Colonic mucosa (tissue), 4 donors: ENCODE measurements at regions of chr6 and their contacts with region 1.

Region 1: DNA sequence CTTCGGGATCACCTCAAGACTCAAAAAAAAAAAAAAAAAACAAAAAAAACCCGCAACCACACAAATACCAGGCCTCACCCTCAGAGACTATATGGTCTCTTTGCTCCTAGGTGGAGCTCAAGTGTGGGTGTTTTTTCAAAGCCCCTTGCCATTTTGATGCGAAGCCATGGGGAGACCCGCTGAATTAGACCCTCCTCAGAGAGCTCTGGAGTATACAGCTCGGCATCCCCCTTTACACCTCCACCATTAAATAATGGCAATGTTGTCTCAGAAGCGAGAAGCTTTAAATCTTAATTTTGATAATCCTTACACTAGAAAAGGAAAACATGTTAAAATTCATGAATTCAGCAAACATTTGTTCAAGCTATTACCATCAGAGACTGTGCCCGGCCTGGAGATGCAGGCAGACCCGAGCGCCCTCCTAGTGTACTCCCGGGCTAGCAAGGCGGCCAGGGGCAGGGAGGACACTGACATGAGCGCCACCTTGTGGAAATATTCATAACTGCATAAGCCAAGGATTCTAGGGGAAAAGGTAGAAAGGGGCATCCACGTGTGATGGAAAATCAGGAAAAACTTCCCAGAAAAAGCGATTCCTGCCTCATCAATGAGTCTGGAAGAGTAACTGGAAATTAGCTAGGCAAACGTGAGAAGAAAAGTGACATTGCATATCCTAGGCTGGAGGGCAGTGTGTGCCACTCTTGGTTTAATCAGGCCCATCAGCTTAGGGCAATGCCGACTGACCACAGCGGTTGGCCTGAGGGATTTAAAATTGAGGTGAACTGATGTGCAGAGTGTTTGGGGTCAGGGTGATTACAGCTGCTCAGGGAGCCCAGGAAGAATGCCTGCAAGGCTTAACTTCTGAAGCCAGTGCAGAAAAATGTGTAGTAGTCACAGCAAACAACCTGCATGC is 72.5 kb downstream of the B3GAT2 start:
- DNase-seq: peak; percentile 65
- H3K4me3 ChIP-seq: no peak overlapping the region
- H3K27ac ChIP-seq: no peak overlapping the region
- H3K4me1 ChIP-seq: no peaks in the 10 kb centered on the region
- H3K27me3 ChIP-seq: no peaks in the 10 kb centered on the region
- CTCF ChIP-seq: peak; percentile 91

Region 2: DNA sequence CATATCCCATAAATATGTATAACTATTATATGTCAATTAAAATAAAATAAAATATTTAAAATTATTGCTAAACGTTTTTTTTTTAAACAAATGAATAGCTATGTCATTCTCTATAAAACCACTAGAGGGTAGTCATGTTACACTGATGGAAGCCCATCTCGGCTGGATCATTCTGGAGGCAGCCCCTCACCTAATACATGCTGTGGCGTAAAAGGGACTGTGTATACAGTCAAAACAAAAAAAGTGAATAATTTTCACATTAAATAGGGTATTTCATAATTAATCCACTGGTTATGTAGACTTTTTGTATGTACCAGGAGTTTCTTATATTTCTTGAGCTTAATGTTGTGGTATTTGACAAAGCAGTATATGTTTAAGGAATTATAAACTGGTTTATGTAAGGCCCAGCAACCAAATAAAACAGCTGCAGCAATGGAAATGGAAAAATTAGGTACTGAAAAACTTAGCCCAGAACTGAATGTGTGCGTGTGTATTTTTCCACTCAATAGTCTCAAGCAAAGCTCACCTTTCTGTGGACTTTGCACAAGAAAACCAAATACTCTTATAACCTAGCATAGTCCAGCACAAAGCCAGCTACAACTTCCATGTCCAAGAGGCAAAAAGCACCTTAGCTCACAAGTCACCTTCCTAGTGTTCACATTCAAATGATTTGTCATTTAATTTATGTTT is 663.2 kb before region 1 on chr6:
- intact Hi-C with region 1: loop called (anchors 10 kb)
- DNase-seq: no peak
- H3K4me3 ChIP-seq: no peak overlapping the region
- H3K27ac ChIP-seq: no peak overlapping the region
- H3K4me1 ChIP-seq: no peaks in the 10 kb centered on the region
- H3K27me3 ChIP-seq: no peaks in the 10 kb centered on the region
- CTCF ChIP-seq: peak; percentile 81

Region 3: DNA sequence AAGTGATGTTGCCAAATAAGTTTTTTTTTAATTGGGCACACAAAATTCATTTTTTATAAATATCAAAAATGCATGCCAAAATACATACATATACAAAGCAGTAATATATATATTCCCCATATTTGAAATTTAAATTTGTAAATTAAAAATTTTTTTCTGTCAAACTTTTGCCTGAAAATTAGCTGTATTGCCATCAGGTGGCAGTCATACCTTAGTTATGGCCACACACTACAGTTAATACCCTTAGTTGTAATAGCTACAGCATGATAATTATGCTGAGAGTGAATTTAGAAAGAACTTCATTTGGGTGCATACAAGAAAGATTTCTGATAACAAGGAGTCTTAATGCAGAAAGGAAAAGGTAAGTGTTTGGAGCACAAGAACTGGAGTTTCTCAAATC is 363.8 kb before region 1 on chr6:
- intact Hi-C with region 1: loop called (anchors 10 kb)
- DNase-seq: no peak
- H3K4me3 ChIP-seq: no peak overlapping the region
- H3K27ac ChIP-seq: no peak overlapping the region
- H3K4me1 ChIP-seq: no peaks in the 10 kb centered on the region
- H3K27me3 ChIP-seq: no peaks in the 10 kb centered on the region
- CTCF ChIP-seq: no peak

Region 4: GRCh38 chr6:70551566-70551965 is 332.8 kb before region 1 on chr6:
- intact Hi-C with region 1: loop called (anchors 5 kb)
- DNase-seq: no peak
- H3K4me3 ChIP-seq: no peak overlapping the region
- H3K27ac ChIP-seq: no peak overlapping the region
- H3K4me1 ChIP-seq: no peaks in the 10 kb centered on the region
- H3K27me3 ChIP-seq: no peaks in the 10 kb centered on the region
- CTCF ChIP-seq: no peak

Region 5: GRCh38 chr6:70633870-70634269 is 250.5 kb before region 1 on chr6:
- intact Hi-C with region 1: no loop called
- DNase-seq: no peak
- H3K4me3 ChIP-seq: no peak overlapping the region
- H3K27ac ChIP-seq: no peak overlapping the region
- H3K4me1 ChIP-seq: no peaks in the 10 kb centered on the region
- H3K27me3 ChIP-seq: no peaks in the 10 kb centered on the region
- CTCF ChIP-seq: no peak

Region 6: GRCh38 chr6:70706491-70707123 is 177.7 kb before region 1 on chr6:
- intact Hi-C with region 1: loop called (anchors 5 kb)
- DNase-seq: no peak
- H3K4me3 ChIP-seq: no peak overlapping the region
- H3K27ac ChIP-seq: no peak overlapping the region
- H3K4me1 ChIP-seq: peaks cover 3% of the 10 kb centered on the region
- H3K27me3 ChIP-seq: no peaks in the 10 kb centered on the region
- CTCF ChIP-seq: peak; percentile 54